Dendritic cell treated with granulocyte-macrophage colony-stimulating factor and Interleukin-4, amounts not matched to agents 40 ng/mL and 50 ng/mL, for 4 days (primary cell): ENCODE measurements at regions of chr9 and their contacts with region 1.

Region 1: DNA sequence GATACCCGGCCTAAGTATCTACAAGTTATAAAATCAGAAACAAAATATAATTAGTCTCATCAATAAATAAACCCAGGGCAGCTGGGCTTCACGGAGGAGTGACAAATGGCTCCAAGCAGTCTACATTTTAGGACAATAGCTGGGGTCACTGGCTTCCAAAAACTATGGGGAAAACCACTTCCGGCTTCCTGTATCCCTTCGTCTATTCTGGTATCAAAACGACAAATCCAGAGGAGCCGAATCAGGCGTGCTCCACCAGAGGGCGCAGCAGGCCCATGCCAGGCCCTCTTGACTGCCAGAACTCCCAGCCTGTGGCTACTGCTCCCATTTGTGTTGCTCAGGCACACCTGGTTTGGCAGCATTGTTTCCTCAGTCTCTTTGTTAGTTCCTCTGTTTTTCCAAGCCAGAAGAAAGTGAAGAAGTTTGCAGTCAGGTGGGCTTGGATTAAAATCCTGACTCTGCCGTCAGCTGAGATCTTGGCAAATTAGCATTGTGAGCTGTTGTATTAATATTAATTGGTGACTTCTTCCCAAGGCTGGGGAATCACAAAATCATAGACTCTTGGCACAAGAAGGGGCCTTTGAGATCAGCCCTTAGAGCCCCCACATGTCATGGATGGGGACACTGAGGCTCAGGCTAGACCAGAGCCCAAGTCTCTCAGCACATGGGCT is 11.6 kb upstream of the RAB14 start:
- H3K4me3 Mint-ChIP-seq: no peak overlapping the region
- H3K27ac Mint-ChIP-seq: no peak overlapping the region
- H3K4me1 Mint-ChIP-seq: peaks cover 50% of the 10 kb centered on the region
- H3K27me3 Mint-ChIP-seq: no peaks in the 10 kb centered on the region

Region 2: DNA sequence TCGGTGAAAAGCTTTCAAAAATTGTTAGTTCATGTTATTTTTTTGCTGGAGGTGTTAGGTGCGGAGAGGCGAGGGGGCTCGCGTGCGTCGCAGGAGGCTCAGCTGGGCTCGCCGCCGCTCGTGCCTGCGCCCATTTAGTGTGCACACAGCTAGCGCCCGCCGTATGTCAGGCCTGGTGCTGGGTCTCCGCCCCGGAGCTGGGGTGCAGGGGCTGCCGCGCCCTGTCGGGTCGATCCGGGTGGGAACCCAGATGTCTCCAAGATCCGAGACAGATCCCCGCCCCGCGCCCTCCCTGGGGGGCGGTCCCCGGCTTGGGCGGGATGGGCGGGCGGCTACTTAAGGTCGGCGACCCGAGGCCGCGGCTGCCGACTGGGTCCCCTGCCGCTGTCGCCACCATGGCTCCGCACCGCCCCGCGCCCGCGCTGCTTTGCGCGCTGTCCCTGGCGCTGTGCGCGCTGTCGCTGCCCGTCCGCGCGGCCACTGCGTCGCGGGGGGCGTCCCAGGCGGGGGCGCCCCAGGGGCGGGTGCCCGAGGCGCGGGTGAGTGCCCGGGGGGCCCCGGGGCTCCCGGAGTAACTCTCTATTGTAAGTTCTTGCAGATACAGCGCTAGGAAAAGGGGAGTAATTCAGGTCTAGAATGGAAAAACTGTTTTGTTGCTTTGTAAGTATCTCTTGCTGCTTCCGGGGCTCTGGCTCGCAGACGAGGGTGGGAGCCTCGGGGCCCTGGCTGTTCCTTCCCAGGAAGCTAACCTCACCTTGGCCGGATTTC is 86.4 kb after region 1 on chr9:
- intact Hi-C with region 1: loop called (anchors 5 kb)
- H3K4me3 Mint-ChIP-seq: peak overlapping the region; percentile 71
- H3K27ac Mint-ChIP-seq: peak overlapping the region; percentile 77
- H3K4me1 Mint-ChIP-seq: peaks cover 94% of the 10 kb centered on the region
- H3K27me3 Mint-ChIP-seq: no peaks in the 10 kb centered on the region

Region 3: DNA sequence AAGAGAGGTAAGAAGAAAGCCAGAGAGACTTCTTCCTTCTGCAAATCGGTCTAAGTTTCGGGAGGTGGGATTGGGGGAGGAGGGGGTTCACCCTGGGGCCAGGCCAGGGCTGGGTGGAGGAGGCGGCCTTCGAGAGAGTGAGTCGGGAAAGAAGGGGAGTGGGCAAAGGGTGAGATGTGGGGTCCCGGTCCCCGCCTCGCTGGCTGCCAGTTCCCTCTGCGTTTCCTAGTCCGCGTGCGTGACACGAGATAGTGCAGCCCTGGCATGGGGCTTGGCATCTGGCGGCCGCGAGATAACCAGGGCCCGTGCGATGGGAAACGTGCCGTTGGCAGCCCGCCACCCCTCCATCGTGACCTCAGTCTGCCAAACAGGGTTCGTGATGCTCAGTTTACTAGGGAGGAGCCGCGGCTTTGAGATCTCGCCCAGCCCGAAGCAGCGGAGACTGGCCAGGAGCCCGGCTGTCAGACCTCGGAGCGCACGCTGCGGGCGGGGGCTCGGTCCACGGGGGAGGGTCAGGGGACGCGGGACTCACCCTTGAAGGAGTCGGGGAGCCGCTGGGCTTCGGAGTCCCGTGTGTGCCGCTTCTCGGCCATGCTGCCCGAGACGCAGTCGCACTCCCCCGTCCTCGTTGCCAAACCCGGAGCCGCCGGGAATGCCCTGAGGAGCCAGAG is 156.5 kb after region 1 on chr9 and contains the start of gene STOM:
- intact Hi-C with region 1: loop called (anchors 5 kb)
- H3K4me3 Mint-ChIP-seq: peak within 1 kb of the TSS; percentile 91
- H3K27ac Mint-ChIP-seq: peak within 1 kb of the TSS; percentile 95
- H3K4me1 Mint-ChIP-seq: peaks cover 52% of the 10 kb centered on the region
- H3K27me3 Mint-ChIP-seq: no peaks in the 10 kb centered on the region